Dendritic cell treated with granulocyte-macrophage colony-stimulating factor and Interleukin-4, amounts not matched to agents 40 ng/mL and 50 ng/mL, for 4 days (primary cell): ENCODE measurements at regions of chr4 and their contacts with region 1.

Region 1: GRCh38 chr4:38804654-38805295 is at the start of gene TLR1:
- H3K4me3 Mint-ChIP-seq: peak within 1 kb of the TSS; percentile 88
- H3K27ac Mint-ChIP-seq: peak within 1 kb of the TSS; percentile 96
- H3K4me1 Mint-ChIP-seq: peaks cover 66% of the 10 kb centered on the region
- H3K27me3 Mint-ChIP-seq: no peaks in the 10 kb centered on the region

Region 2: GRCh38 chr4:37584071-37584470 is 1220.7 kb before region 1 on chr4:
- intact Hi-C with region 1: no loop called
- H3K4me3 Mint-ChIP-seq: no peak overlapping the region
- H3K27ac Mint-ChIP-seq: no peak overlapping the region
- H3K4me1 Mint-ChIP-seq: peaks cover 9% of the 10 kb centered on the region
- H3K27me3 Mint-ChIP-seq: peaks cover 16% of the 10 kb centered on the region

Region 3: DNA sequence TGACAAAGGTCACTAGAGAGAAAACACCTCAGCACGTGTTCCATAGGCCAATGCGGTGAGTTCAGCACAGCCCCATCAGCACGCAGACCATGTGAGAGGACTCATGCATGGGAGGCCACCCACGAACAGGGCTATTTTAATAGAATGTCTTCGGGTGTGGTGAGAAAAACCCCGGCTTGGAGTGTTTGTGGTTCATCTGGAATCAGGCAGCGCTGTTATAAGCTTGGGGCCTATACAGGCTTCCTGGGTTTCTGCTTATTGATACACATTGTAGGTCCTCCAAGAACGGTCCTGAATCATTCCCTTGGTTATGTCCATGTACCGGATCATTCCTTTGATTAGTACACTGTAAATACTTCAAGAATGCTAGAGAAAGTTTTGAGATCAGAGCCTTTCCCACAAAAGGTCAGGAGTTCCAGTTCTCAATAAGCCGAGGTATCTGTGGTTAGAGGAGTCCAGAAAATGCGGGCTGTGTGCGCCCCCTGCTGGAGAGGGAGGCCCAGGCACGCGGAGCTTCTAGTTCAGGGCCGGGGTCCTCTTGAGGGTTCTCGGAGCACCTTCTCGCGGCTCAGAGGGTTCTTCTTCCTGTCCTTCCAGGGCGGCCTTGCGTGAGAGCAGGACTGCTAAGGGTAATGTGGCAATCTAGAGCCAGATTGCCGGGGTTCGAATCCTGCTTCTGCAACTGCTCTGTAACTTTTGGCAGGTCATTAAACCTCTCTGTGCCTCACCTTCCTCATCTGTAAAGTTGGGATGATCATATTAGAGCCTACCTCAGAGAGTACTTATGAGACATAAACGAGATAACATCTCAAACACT is 73.7 kb before region 1 on chr4:
- intact Hi-C with region 1: no loop called
- H3K4me3 Mint-ChIP-seq: no peak overlapping the region
- H3K27ac Mint-ChIP-seq: peak overlapping the region; percentile 39
- H3K4me1 Mint-ChIP-seq: peaks cover 42% of the 10 kb centered on the region
- H3K27me3 Mint-ChIP-seq: no peaks in the 10 kb centered on the region

Region 4: DNA sequence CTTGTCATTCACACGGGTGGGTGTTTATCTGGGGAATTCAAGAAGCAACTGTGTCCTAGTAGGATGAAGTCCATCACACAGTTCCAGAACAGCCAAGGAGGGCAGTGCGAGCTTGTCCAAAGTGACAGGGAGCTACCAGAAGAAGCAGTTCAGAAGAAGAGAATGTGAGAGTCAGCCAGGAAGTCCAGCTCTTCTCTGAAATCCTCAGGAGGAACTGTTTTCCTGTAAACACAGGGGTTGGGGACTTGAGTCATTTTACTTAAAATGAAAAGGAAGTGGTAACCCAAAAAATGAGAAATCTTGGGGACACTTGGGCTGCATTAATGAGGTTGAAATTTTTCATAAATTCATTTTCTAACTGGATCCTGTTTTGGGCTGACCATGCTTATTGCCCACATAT is 13.8 kb before region 1 on chr4:
- intact Hi-C with region 1: loop called (anchors 2 kb)
- H3K4me3 Mint-ChIP-seq: peak overlapping the region; percentile 37
- H3K27ac Mint-ChIP-seq: peak overlapping the region; percentile 84
- H3K4me1 Mint-ChIP-seq: peaks cover 75% of the 10 kb centered on the region
- H3K27me3 Mint-ChIP-seq: no peaks in the 10 kb centered on the region

Region 5: DNA sequence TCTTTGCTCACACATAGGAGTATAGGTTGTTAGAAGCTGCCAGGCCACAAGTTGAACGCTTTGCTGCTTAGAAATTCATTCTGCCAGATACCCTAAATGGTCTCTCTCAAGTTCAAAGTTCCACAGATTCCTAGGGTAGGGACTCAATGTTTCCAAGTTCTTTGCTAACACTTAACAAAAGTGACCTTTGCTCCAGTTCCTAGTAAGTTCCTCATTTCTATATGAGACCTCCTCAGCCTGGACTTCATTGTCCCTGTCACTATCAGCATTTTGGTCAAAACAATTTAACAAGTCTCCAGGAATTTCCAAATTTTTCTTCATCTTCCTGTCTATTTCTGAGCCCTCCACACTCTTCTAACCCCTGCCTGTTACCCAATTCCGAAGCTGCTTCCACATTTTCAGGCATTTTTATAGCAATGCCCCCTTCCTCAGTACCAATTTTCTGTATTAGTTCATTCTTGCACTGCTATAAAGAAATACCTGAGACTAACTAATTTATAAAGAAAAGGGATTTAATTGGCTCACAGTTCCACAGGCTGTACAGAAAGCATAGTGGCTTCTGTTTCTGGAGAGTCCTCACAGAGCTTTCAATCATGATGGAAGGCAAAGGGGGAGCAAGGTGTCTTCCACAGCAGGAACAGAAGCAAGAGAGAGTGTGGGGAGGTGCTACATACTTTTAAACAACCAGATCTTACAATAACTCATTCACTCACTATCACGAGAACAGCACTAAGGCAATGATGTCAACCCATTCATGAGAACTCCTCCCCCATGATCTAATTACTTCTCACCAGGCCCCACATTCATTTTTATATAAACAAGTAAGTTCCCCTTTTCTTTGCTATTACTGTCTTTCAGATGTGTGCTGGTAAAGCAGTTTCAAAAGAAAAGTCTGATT is 11.4 kb after region 1 on chr4:
- intact Hi-C with region 1: loop called (anchors 1 kb)
- H3K4me3 Mint-ChIP-seq: peak overlapping the region; percentile 27
- H3K27ac Mint-ChIP-seq: peak overlapping the region; percentile 79
- H3K4me1 Mint-ChIP-seq: peaks cover 68% of the 10 kb centered on the region
- H3K27me3 Mint-ChIP-seq: no peaks in the 10 kb centered on the region